ENCODE measurements at regions of chr18 and their contacts with region 1.

Region 1: GRCh38 chr18:35949903-35950627 is 22.4 kb upstream of the RMP24 start:
- DNase-seq: peak; percentile 77
- ATAC-seq: peak; percentile 86
- H3K4me3 ChIP-seq: peak overlapping the region; percentile 11 to 56 (median 49)
- H3K4me3 Mint-ChIP-seq: peak overlapping the region; percentile 81
- H3K27ac ChIP-seq: no peak overlapping the region
- H3K27ac Mint-ChIP-seq: no peak overlapping the region
- H3K4me1 ChIP-seq: peaks cover 7 to 8% of the 10 kb centered on the region in 2 donors
- H3K4me1 Mint-ChIP-seq: peaks cover 10% of the 10 kb centered on the region
- H3K27me3 ChIP-seq: peaks cover 0 to 10% (median 7%) of the 10 kb centered on the region in 4 experiments
- H3K27me3 Mint-ChIP-seq: peaks cover 32% of the 10 kb centered on the region
- CTCF ChIP-seq: peak; percentile 99

Region 2: GRCh38 chr18:35386600-35387351 is 563.3 kb before region 1 on chr18:
- CTCF ChIA-PET with region 1: interaction called, 3 read pairs
- POLR2A ChIA-PET with region 1: no interaction called
- intact Hi-C with region 1: loop called (anchors 1 kb)
- DNase-seq: peak; percentile 83
- ATAC-seq: peak; percentile 95
- H3K4me3 ChIP-seq: no peak overlapping the region
- H3K4me3 Mint-ChIP-seq: no peak overlapping the region
- H3K27ac ChIP-seq: no peak overlapping the region
- H3K27ac Mint-ChIP-seq: no peak overlapping the region
- H3K4me1 ChIP-seq: peaks cover 5 to 6% of the 10 kb centered on the region in 2 donors
- H3K4me1 Mint-ChIP-seq: peaks cover 9% of the 10 kb centered on the region
- H3K27me3 ChIP-seq: peaks cover 0 to 7% (median 2%) of the 10 kb centered on the region in 4 experiments
- H3K27me3 Mint-ChIP-seq: peaks cover 31% of the 10 kb centered on the region
- CTCF ChIP-seq: peak; percentile 98

Region 3: DNA sequence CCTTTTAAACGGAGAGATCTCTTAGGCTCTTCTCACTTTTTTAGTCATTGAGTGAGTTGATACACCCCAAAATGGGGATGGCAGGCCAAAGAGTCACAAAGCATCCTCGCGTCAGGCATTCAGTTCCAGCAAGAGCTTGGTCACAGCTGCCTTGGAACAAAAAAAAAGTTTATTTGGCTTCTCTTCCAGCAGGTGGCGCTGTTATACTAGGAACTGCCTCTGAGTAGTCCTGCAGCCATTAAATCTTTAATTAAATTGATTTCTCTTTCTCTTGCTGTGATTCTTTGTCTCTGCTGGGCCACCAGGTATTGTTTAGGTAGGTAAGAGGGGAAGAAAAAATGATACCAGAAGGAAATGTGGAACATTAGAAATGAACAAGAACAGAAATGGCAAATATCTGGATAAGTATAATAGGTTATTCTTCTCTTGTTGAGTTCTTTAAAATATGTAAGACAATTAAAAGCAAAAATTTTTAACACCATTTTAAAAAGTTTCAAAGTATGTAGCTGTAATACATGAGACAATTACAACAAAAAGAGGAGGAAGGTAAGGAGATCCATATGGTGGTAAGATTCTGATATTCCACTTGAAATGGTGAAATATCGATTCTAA is 193.5 kb before region 1 on chr18:
- CTCF ChIA-PET with region 1: interaction called, 106 read pairs
- POLR2A ChIA-PET with region 1: no interaction called
- intact Hi-C with region 1: loop called (anchors 1 kb)
- DNase-seq: peak; percentile 75
- ATAC-seq: peak; percentile 63
- H3K4me3 ChIP-seq: no peak overlapping the region
- H3K4me3 Mint-ChIP-seq: no peak overlapping the region
- H3K27ac ChIP-seq: no peak overlapping the region
- H3K27ac Mint-ChIP-seq: no peak overlapping the region
- H3K4me1 ChIP-seq: no peaks in the 10 kb centered on the region
- H3K4me1 Mint-ChIP-seq: peaks cover 2% of the 10 kb centered on the region
- H3K27me3 ChIP-seq: peaks cover 0 to 11% (median 6%) of the 10 kb centered on the region in 4 experiments
- H3K27me3 Mint-ChIP-seq: peaks cover 27% of the 10 kb centered on the region
- CTCF ChIP-seq: peak; percentile 99

Region 4: GRCh38 chr18:35993013-35993412 is 42.9 kb after region 1 on chr18:
- CTCF ChIA-PET with region 1: no interaction called
- POLR2A ChIA-PET with region 1: no interaction called
- intact Hi-C with region 1: no loop called
- DNase-seq: no peak
- ATAC-seq: no peak
- H3K4me3 ChIP-seq: no peak overlapping the region
- H3K4me3 Mint-ChIP-seq: no peak overlapping the region
- H3K27ac ChIP-seq: no peak overlapping the region
- H3K27ac Mint-ChIP-seq: no peak overlapping the region
- H3K4me1 ChIP-seq: no peaks in the 10 kb centered on the region
- H3K4me1 Mint-ChIP-seq: no peaks in the 10 kb centered on the region
- H3K27me3 ChIP-seq: no peaks in the 10 kb centered on the region
- H3K27me3 Mint-ChIP-seq: no peaks in the 10 kb centered on the region
- CTCF ChIP-seq: no peak

Region 5: DNA sequence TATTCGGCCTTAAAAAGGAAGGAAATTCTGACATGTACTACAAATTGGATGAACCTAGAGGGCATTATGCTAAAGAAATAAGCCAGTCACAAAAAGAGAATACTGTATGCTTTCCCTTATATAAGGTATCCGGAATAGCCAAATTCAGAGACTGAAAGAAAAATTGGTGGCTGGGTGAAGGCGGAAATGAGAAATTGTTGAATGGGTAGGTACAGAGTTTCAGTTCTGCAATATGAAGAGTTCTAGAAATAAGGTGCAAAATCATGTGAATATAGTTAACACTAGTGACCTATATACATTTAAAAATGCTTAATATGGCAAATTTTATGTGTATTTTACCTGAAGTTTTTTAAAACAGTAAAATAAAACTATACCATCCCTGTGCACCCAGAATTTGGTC is 65.6 kb after region 1 on chr18:
- CTCF ChIA-PET with region 1: no interaction called
- POLR2A ChIA-PET with region 1: no interaction called
- intact Hi-C with region 1: no loop called
- DNase-seq: peak; percentile 71
- ATAC-seq: peak; percentile 76
- H3K4me3 ChIP-seq: no peak overlapping the region
- H3K4me3 Mint-ChIP-seq: peak overlapping the region; percentile 3
- H3K27ac ChIP-seq: no peak overlapping the region
- H3K27ac Mint-ChIP-seq: peak overlapping the region; percentile 12
- H3K4me1 ChIP-seq: peaks cover 13 to 19% of the 10 kb centered on the region in 2 donors
- H3K4me1 Mint-ChIP-seq: peaks cover 24% of the 10 kb centered on the region
- H3K27me3 ChIP-seq: no peaks in the 10 kb centered on the region
- H3K27me3 Mint-ChIP-seq: no peaks in the 10 kb centered on the region
- CTCF ChIP-seq: no peak